ENCODE measurements at regions of chrX and their contacts with region 1.

Region 1: GRCh38 chrX:79400623-79401022 is 33.5 kb upstream of the ITM2A start:
- DNase-seq: no peak
- H3K4me3 ChIP-seq: no peak overlapping the region
- H3K27ac ChIP-seq: no peak overlapping the region
- H3K4me1 ChIP-seq: no peaks in the 10 kb centered on the region
- H3K27me3 ChIP-seq: no peaks in the 10 kb centered on the region
- CTCF ChIP-seq: no peak
- POLR2A ChIP-seq: no peak

Region 2: DNA sequence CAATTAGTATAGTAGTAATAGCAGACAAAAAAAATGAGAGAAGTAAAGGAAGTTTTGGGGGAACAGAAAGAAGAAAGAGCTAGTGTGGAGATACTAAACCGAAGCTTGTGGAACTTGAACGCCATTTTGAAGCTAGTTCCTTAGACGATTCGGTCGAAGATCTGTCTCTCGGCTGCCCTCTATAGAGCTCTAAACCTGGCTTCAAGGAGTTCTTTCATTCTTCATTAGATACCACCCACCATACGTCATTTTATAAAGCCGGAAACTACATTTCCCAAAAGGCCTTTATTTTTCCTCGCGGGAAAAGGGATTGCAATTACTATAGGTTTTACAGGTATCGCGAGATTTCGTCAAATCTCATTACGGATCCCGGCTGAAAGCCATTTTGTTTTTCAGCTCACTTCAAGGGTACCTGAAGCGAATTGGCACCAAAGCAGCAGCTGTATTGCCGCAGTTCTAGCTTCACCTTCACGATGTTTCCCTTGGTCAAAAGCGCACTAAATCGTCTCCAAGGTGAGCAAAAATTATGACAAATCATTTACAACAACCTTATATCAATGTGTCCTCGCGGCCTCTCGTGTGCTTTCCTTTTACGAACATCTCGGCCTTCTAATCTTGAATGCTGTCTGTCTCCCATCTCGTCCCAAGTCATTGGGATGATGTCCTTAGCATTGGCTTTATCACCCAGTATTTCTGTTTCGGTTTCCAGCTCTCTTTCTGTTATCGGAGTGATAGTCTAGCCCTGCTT is 1501.4 kb before region 1 on chrX and contains the start of gene COX7B:
- intact Hi-C with region 1: no loop called
- DNase-seq: peak in 1 of 2 donors; percentile 87
- H3K4me3 ChIP-seq: peak within 1 kb of the TSS; percentile 47 to 51
- H3K27ac ChIP-seq: peak within 1 kb of the TSS; percentile 74
- H3K4me1 ChIP-seq: peaks cover under 1% of the 10 kb centered on the region
- H3K27me3 ChIP-seq: no peaks in the 10 kb centered on the region
- CTCF ChIP-seq: no peak
- POLR2A ChIP-seq: peak in 1 of 2 donors; percentile 43
- total RNA-seq, gene COX7B: 483 TPM

Region 3: DNA sequence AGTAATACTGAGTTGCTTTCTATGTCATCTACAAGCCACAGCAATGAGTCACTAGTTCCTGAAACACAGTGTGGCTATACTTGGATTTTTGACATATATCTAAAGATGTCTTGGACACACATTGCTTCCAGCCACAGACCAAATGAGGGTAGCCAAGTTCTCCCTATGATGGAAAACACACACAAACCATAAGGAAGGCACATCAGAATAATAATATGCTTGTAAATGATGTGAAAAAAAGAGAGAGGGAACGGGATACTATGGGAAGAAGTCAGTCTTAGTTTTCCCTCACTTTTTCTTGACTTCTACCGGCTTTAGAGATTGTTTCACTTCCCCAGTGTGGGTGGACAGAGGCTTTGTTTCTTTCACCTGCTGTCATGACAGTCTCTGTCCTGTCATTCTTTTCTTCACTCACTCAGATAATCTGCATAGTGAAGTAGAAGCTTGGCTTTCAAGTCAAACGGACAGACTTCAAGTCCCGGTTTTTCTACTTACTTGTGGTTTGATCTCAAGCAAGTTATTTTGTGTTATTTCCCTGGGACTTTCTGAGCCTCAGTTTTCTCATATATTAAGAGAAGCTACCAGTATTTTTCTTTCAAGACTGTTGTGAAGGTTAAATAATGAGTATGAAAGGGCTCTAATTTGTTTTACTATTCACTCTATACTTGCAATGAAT is 420.7 kb before region 1 on chrX:
- intact Hi-C with region 1: loop called (anchors 5 kb)
- DNase-seq: no peak
- H3K4me3 ChIP-seq: no peak overlapping the region
- H3K27ac ChIP-seq: no peak overlapping the region
- H3K4me1 ChIP-seq: no peaks in the 10 kb centered on the region
- H3K27me3 ChIP-seq: no peaks in the 10 kb centered on the region
- CTCF ChIP-seq: no peak
- POLR2A ChIP-seq: no peak

Region 4: DNA sequence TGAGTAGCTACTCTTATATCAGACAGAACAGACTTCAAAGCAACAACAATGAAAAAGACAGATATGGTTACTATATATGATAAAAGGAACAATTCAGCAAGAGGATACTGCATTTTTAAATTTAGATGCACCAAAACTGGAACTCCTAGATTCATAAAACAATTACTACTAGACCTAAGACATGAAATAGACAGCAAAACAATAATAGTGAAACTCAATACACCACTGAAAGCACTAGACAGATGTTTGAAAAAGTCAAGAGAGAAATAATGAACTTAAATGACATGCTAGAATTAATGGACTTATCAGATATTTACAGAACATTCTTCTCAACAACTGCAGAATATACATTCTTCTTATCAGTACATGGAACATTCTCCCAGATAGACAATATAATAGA is 66.0 kb after region 1 on chrX:
- intact Hi-C with region 1: no loop called
- DNase-seq: no peak
- H3K4me3 ChIP-seq: no peak overlapping the region
- H3K27ac ChIP-seq: no peak overlapping the region
- H3K4me1 ChIP-seq: no peaks in the 10 kb centered on the region
- H3K27me3 ChIP-seq: no peaks in the 10 kb centered on the region
- CTCF ChIP-seq: no peak
- POLR2A ChIP-seq: no peak

Region 5: GRCh38 chrX:81286646-81287045 is 1886.0 kb after region 1 on chrX:
- intact Hi-C with region 1: no loop called
- DNase-seq: no peak
- H3K4me3 ChIP-seq: no peak overlapping the region
- H3K27ac ChIP-seq: no peak overlapping the region
- H3K4me1 ChIP-seq: no peaks in the 10 kb centered on the region
- H3K27me3 ChIP-seq: no peaks in the 10 kb centered on the region
- CTCF ChIP-seq: no peak
- POLR2A ChIP-seq: no peak

Measured in vagina (tissue), 2 donors.